WTC11 (cell line): ENCODE measurements at regions of chr19 and their contacts with region 1.

Region 1: DNA sequence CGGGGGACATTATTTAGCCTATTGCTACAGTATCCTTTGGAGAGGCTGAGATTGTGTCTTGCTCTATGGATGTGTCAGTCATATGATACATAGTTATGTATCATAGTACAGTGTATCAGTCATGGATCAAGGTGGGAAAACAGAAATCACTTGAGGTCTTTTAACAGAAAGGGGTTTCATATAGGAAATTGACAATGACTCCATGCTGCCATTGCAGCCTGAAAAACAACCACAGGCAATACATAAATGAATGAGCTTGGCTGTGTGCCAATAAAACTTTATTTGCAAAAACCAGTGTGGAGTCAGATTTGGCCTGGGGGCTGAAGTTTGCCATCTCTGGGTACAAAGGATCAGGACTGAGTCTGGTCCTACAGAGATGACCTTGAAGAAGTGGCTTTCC is 35.4 kb downstream of the COLGALT1 start:
- DNase-seq: no peak
- ATAC-seq: no peak
- H3K4me3 Mint-ChIP-seq: no peak overlapping the region
- H3K27ac Mint-ChIP-seq: no peak overlapping the region
- H3K4me1 Mint-ChIP-seq: no peaks in the 10 kb centered on the region
- H3K27me3 Mint-ChIP-seq: peaks cover 8% of the 10 kb centered on the region
- CTCF ChIP-seq: no peak

Region 2: GRCh38 chr19:17889609-17890214 is 298.8 kb after region 1 on chr19:
- CTCF ChIA-PET with region 1: no interaction called
- POLR2A ChIA-PET with region 1: interaction called, 13 read pairs
- DNase-seq: peak; percentile 80
- ATAC-seq: peak; percentile 87
- H3K4me3 Mint-ChIP-seq: no peak overlapping the region
- H3K27ac Mint-ChIP-seq: no peak overlapping the region
- H3K4me1 Mint-ChIP-seq: peaks cover 4% of the 10 kb centered on the region; the same call in 1 of the 2 replicates
- H3K27me3 Mint-ChIP-seq: peaks cover 16% of the 10 kb centered on the region
- CTCF ChIP-seq: no peak